CD4-positive, alpha-beta T cell (primary cell): ENCODE measurements at regions of chr21 and their contacts with region 1.

Region 1: DNA sequence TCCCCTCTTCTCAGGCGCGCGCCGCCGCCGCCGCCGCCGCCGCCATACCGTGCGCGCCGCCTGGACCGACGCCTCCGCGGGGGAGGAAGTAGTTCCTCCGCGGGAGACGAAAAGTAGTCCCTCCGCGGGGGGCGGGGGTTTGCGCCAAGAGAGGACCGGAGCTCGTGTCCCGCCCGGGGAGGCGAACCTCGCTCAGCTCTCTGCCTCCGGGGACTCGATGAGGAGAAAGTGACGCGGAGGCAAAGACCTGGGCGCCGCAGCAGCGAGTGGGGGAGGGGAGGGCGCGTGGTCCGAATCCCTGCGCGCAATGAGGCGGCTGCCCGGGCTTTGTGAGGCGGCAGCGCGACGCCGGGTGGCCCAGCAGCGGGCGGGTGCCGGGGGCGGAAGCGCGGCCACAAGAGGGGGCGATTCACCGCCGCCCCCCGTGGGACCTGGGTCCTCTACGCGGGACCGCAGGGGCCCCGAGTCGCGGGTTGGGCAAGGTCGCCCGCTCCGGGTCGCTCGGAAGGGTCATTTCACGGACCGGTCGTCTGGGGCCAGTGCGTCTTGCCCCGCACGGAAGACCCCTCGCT is at the start of gene BRWD1:
- DNase-seq: peak; percentile 68 to 92 (median 75)
- ATAC-seq: peak; percentile 27
- H3K4me3 ChIP-seq: peak within 1 kb of the TSS; percentile 79
- H3K4me3 Mint-ChIP-seq: peak within 1 kb of the TSS; percentile 95
- H3K27ac ChIP-seq: peak within 1 kb of the TSS; percentile 55 to 85
- H3K27ac Mint-ChIP-seq: peak within 1 kb of the TSS; percentile 93
- H3K4me1 ChIP-seq: peaks cover 31% of the 10 kb centered on the region
- H3K4me1 Mint-ChIP-seq: peaks cover 50% of the 10 kb centered on the region
- H3K27me3 ChIP-seq: no peaks in the 10 kb centered on the region
- H3K27me3 Mint-ChIP-seq: no peaks in the 10 kb centered on the region
- CTCF ChIP-seq: no peak
- total RNA-seq, gene BRWD1: 84.7 to 92.2 TPM

Region 2: DNA sequence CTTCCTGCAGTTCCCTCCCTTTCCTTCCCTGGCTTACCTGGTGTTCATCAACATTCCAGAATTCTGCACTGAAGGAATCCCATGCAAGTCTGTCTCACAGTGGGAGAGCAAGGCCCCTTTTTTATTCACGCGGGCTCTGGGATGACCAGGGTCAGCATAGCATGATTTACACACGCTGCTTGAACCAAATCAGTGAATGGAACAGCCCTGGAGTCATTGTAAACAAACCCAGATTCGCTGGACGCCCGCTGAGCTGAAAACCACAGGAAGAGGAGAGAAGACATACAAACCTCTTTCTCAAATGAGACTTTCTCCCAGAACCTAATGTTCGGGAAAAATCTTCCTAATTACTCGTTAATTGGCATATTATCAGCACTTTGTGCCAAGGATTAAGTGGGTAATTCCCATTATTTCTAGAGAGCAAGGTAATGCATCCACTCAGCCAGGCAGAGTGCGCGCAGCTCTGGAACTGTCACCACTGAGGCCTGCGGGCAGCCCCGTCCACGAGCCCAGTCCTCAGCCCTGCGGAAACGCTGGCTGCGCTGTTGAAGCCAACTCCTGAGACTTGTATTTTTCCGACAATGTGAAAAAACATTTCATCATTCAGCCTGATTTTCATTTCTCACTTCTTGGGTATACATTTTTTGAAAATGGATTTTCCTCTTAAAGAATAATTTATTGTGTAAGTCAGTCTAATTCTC is 368.0 kb before region 1 on chr21:
- CTCF ChIA-PET with region 1: no interaction called
- POLR2A ChIA-PET with region 1: no interaction called
- intact Hi-C with region 1: no loop called
- DNase-seq: no peak
- ATAC-seq: no peak
- H3K4me3 ChIP-seq: no peak overlapping the region
- H3K4me3 Mint-ChIP-seq: no peak overlapping the region
- H3K27ac ChIP-seq: no peak overlapping the region
- H3K27ac Mint-ChIP-seq: no peak overlapping the region
- H3K4me1 ChIP-seq: no peaks in the 10 kb centered on the region
- H3K4me1 Mint-ChIP-seq: no peaks in the 10 kb centered on the region
- H3K27me3 ChIP-seq: no peaks in the 10 kb centered on the region
- H3K27me3 Mint-ChIP-seq: no peaks in the 10 kb centered on the region
- CTCF ChIP-seq: no peak

Region 3: GRCh38 chr21:39183237-39184007 is 130.2 kb before region 1 on chr21 and contains the start of gene PSMG1:
- CTCF ChIA-PET with region 1: no interaction called
- POLR2A ChIA-PET with region 1: interaction called, 35 read pairs
- intact Hi-C with region 1: loop called (anchors 2 to 5 kb)
- DNase-seq: peak; percentile 86 to 97 (median 92)
- ATAC-seq: peak; percentile 92
- H3K4me3 ChIP-seq: peak within 1 kb of the TSS; percentile 87
- H3K4me3 Mint-ChIP-seq: peak within 1 kb of the TSS; percentile 91
- H3K27ac ChIP-seq: peak within 1 kb of the TSS; percentile 81 to 92
- H3K27ac Mint-ChIP-seq: peak within 1 kb of the TSS; percentile 91
- H3K4me1 ChIP-seq: peaks cover 18% of the 10 kb centered on the region
- H3K4me1 Mint-ChIP-seq: peaks cover 76% of the 10 kb centered on the region
- H3K27me3 ChIP-seq: no peaks in the 10 kb centered on the region
- H3K27me3 Mint-ChIP-seq: no peaks in the 10 kb centered on the region
- CTCF ChIP-seq: no peak
- total RNA-seq, gene PSMG1: 7.8 to 7.9 TPM

Region 4: GRCh38 chr21:39296891-39297290 is 16.8 kb before region 1 on chr21:
- CTCF ChIA-PET with region 1: interaction called, 3 read pairs
- POLR2A ChIA-PET with region 1: interaction called, 12 read pairs
- intact Hi-C with region 1: no loop called
- DNase-seq: no peak
- ATAC-seq: no peak
- H3K4me3 ChIP-seq: no peak overlapping the region
- H3K4me3 Mint-ChIP-seq: no peak overlapping the region
- H3K27ac ChIP-seq: no peak overlapping the region
- H3K27ac Mint-ChIP-seq: no peak overlapping the region
- H3K4me1 ChIP-seq: no peaks in the 10 kb centered on the region
- H3K4me1 Mint-ChIP-seq: peaks cover 43% of the 10 kb centered on the region
- H3K27me3 ChIP-seq: no peaks in the 10 kb centered on the region
- H3K27me3 Mint-ChIP-seq: no peaks in the 10 kb centered on the region
- CTCF ChIP-seq: no peak

Region 5: DNA sequence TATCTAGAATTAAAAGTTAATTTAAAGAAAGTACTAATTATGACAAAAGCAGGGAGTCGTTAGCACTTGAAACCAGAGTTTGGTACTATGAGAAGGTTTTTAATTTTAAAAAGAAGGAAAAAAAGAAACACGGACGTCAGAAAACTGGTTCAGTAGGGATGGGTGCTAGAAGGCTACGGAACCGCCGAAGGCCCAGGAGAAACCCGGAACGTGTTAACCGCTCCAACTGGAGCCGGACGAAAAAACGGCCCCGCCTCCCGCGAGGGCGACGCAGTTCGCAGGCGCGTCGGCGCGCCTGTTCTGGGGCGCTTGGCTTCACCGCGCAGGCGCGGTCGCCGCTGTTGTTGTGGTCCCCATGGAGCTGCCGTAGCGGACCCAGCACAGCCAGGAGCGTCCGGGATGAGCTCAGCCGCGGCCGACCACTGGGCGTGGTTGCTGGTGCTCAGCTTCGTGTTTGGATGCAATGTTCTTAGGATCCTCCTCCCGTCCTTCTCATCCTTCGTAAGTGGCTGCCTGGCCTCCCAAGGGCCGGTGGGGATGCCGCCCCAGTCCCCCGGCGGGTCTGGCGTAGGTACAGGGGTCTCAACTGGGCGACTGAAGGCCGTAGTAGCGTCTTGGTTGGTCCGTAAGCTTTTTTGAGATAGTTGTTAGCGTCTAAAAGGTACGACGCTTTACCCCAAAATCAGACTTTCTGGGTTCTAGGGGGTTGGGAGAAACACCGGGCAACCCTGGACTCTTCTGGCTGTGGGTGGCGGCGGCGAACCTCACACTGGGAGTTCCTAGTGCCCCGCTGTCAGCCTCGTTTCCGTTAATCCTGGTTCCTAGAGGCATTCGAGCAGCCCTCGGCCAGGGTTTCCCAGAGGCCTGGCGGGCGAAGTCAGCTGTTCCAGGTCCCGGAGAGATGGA is 66.6 kb after region 1 on chr21:
- CTCF ChIA-PET with region 1: interaction called, 3 read pairs
- POLR2A ChIA-PET with region 1: interaction called, 33 read pairs
- intact Hi-C with region 1: no loop called
- DNase-seq: peak; percentile 75 to 95 (median 86)
- ATAC-seq: peak; percentile 97
- H3K4me3 ChIP-seq: peak overlapping the region; percentile 98
- H3K4me3 Mint-ChIP-seq: peak overlapping the region; percentile 93
- H3K27ac ChIP-seq: peak overlapping the region; percentile 75 to 85
- H3K27ac Mint-ChIP-seq: peak overlapping the region; percentile 88
- H3K4me1 ChIP-seq: peaks cover 17% of the 10 kb centered on the region
- H3K4me1 Mint-ChIP-seq: peaks cover 33% of the 10 kb centered on the region
- H3K27me3 ChIP-seq: peaks cover 0 to 2% of the 10 kb centered on the region in 2 experiments
- H3K27me3 Mint-ChIP-seq: no peaks in the 10 kb centered on the region
- CTCF ChIP-seq: no peak

Region 6: GRCh38 chr21:39696618-39697017 is 383.0 kb after region 1 on chr21:
- CTCF ChIA-PET with region 1: no interaction called
- POLR2A ChIA-PET with region 1: no interaction called
- intact Hi-C with region 1: no loop called
- DNase-seq: no peak
- ATAC-seq: no peak
- H3K4me3 ChIP-seq: no peak overlapping the region
- H3K4me3 Mint-ChIP-seq: no peak overlapping the region
- H3K27ac ChIP-seq: no peak overlapping the region
- H3K27ac Mint-ChIP-seq: no peak overlapping the region
- H3K4me1 ChIP-seq: no peaks in the 10 kb centered on the region
- H3K4me1 Mint-ChIP-seq: no peaks in the 10 kb centered on the region
- H3K27me3 ChIP-seq: no peaks in the 10 kb centered on the region
- H3K27me3 Mint-ChIP-seq: peaks cover 16% of the 10 kb centered on the region
- CTCF ChIP-seq: no peak